ENCODE measurements at regions of chr17 and their contacts with region 1.

Region 1: DNA sequence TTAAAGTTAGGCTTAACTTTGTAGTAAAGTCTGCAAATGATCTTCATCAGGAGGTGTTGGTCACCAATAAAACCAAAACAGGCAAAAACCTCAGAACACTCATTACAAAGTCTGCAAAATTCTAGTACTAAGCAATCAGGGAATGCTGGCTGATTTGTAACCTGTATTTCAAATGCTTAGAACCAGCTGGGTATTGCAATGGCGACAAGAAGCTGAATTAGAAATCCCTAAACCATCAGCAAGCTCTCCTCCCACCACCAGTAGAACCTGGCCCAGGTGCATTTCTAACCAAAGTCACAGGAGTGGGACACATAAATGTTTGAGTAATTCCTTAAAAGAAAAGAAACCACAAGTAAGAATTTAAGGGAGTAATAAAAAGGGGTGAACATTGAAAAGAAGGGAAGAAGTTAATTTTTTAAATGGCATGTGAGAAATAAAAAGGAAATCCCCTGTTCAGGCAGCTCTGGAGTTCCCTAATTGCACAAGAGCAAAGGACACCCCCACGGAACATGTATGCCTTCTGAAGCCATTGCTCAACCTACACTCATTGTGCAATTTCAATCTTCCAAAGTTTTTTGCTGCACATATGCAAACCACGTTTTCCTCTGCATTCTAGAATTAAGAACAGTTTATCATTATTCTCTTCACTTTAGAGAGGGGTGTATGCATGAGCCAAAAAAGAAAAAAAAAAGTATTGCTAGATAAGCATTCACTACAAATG is 102.9 kb downstream of the HIC1 start:
- DNase-seq: peak in 1 of 2 donors; percentile 77
- H3K4me3 ChIP-seq: no peak overlapping the region
- H3K27ac ChIP-seq: peak overlapping the region in 2 of 5 donors; percentile 53 to 64
- H3K4me1 ChIP-seq: peaks cover 0 to 21% (median 0%) of the 10 kb centered on the region in 4 donors
- H3K27me3 ChIP-seq: no peaks in the 10 kb centered on the region
- CTCF ChIP-seq: no peak
- EP300 ChIP-seq: no peak
- POLR2A ChIP-seq: no peak

Region 2: GRCh38 chr17:2101448-2102257 is 56.2 kb before region 1 on chr17:
- intact Hi-C with region 1: loop called (anchors 10 kb)
- DNase-seq: peak; percentile 56 to 91
- H3K4me3 ChIP-seq: no peak overlapping the region
- H3K27ac ChIP-seq: peak overlapping the region in 4 of 5 donors; percentile 14 to 42 (median 18)
- H3K4me1 ChIP-seq: peaks cover 11 to 31% (median 20%) of the 10 kb centered on the region in 4 donors
- H3K27me3 ChIP-seq: no peaks in the 10 kb centered on the region
- CTCF ChIP-seq: no peak
- EP300 ChIP-seq: no peak
- POLR2A ChIP-seq: no peak